ENCODE measurements at regions of chr3 and their contacts with region 1.

Region 1: DNA sequence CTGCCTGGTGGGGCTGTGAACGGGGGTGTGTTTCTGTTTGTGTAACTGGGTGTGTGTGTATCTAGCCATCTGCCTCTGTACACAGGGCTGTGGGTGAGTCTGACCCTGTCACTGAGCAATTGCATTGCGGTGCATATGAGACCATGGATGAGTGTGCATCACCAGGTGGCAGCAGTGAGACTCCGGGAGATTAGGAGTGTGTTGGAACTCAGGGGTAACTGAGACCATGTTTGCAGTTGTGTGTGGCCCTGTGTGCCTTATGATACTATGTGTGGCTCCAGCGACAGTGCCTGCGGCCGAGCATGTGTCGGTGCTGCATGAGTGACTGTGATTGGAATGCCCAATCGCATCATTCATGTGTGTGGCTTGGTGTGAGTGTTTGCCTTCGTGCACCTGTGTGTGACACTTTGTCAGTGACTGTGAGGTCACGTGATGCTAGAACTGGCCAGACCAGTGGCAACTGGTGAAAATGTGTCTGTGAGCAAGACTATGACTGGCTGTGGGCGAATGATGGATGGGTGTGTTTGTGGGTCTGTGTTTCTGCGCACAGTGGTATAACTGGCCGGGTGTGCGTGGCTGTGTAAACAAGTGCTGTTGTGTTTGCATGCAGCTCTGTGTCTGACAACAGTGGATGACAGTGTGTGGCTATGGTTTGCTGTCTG is 14.0 kb downstream of the VILL start:
- DNase-seq: peak in 4 of 5 donors; percentile 60 to 79 (median 76)
- H3K4me3 ChIP-seq: no peak overlapping the region
- H3K27ac ChIP-seq: no peak overlapping the region
- H3K4me1 ChIP-seq: no peaks in the 10 kb centered on the region
- H3K27me3 ChIP-seq: no peaks in the 10 kb centered on the region
- CTCF ChIP-seq: peak in 2 of 3 donors; percentile 33 to 52
- EP300 ChIP-seq: no peak
- POLR2A ChIP-seq: no peak

Region 2: GRCh38 chr3:37855363-37855970 is 149.1 kb before region 1 on chr3:
- intact Hi-C with region 1: loop called in 2 of 4 experiments (anchors 2 to 10 kb)
- DNase-seq: peak; percentile 80 to 93 (median 89)
- H3K4me3 ChIP-seq: no peak overlapping the region
- H3K27ac ChIP-seq: no peak overlapping the region
- H3K4me1 ChIP-seq: peaks cover 5% of the 10 kb centered on the region
- H3K27me3 ChIP-seq: no peaks in the 10 kb centered on the region
- CTCF ChIP-seq: peak; percentile 90 to 92 (median 91)
- EP300 ChIP-seq: no peak
- POLR2A ChIP-seq: no peak

Region 3: GRCh38 chr3:38117748-38118420 is 113.3 kb after region 1 on chr3:
- intact Hi-C with region 1: no loop called
- DNase-seq: peak in 3 of 5 donors; percentile 44 to 67 (median 46)
- H3K4me3 ChIP-seq: no peak overlapping the region
- H3K27ac ChIP-seq: no peak overlapping the region
- H3K4me1 ChIP-seq: no peaks in the 10 kb centered on the region
- H3K27me3 ChIP-seq: no peaks in the 10 kb centered on the region
- CTCF ChIP-seq: peak in 1 of 3 donors; percentile 26
- EP300 ChIP-seq: no peak
- POLR2A ChIP-seq: no peak

Region 4: DNA sequence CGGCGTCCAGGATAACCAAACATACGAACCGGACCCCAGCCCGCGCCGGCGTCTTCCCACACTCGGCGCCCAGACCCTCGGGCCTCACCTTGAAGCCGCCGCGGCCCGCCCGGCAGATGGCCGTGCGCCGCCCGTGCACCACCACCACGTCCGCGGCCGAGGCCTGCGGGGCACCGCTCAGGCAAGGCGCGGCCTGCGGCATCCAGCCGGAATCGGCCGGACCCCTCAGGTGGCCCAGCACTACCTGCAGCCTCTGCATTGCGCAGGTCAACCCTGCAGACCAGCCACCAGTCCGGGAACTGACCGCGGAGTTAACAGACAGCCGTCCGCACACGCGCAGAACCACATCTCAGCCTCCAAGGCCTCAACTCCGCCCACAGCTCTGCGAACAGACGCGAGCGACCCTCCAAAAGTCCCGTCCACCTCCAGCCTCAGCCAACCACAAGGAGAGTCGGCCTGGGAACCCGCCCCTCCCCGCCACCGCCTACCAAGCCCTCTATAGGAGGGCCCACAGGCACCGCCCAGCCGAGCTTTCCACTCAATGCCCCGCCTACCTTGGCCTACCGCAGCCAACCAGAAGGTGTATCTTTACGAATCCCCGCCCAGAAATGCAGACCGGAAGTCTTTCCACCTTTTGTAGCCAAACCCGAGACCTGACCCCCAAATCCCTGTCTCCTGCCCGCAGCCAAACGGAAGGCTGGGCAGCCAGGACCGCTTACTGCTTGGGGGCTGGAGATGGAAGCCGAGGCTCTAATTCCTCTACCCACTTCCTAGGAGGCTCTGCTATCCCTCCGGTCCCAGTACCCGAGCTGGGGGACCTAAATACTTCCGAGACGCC is 132.4 kb after region 1 on chr3 and contains the start of gene ACAA1:
- intact Hi-C with region 1: loop called in 1 of 4 experiments (anchors 10 kb)
- DNase-seq: peak; percentile 99 to 100 (median 100)
- H3K4me3 ChIP-seq: peak within 1 kb of the TSS; percentile 96
- H3K27ac ChIP-seq: peak within 1 kb of the TSS; percentile 71 to 94
- H3K4me1 ChIP-seq: peaks cover 21% of the 10 kb centered on the region
- H3K27me3 ChIP-seq: no peaks in the 10 kb centered on the region
- CTCF ChIP-seq: peak in 1 of 3 donors; percentile 15
- EP300 ChIP-seq: no peak
- POLR2A ChIP-seq: peak; percentile 88
- total RNA-seq, gene ACAA1: 27.1 to 50.4 (median 44.9) TPM

Measured in ovary (tissue), 10 donors.